ENCODE measurements at regions of chr9 and their contacts with region 1.

Region 1: DNA sequence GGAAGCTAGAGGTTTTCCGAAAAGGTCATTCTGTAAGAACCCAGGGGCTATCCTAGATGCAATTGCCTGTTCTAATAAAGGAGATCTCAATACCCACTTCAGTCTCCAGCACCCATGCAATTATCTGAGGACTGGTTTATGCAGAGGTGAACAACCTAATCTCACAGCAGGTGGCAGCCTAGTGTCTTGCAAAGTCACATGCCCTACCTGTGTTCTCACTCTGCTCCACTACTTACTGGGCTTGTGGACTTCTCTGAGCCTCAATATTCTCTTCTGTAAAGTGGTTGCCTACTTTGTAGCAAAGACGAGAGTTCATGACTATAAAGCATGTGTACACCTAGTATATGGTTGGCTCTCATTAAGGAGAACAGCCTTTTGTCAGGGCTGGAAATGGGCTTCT is 21.0 kb upstream of the ALDH1B1 start:
- DNase-seq: peak in 1 of 2 donors; percentile 51
- ATAC-seq: no peak
- H3K4me3 ChIP-seq: no peak overlapping the region
- H3K27ac ChIP-seq: no peak overlapping the region
- H3K4me1 ChIP-seq: no peaks in the 10 kb centered on the region
- H3K27me3 ChIP-seq: no peaks in the 10 kb centered on the region

Region 2: DNA sequence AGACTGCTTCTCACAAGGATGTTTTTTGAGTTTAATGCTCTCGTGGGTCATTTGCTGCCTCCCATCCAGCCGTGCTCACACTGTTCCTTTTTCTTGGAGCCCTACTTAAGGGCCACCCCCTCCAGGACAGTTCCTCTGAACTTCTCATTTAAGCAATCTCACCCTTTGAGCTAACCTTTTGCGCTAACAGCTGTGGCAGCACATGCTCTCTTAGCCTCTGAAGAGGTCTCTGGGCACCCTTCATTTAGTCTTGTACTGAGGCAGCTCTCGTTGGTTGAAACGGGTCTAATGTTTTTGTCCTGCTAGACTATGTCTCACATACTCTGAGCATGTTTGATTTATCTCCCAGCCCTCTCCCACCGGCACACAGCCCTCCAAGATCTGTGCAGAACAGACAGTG is 32.8 kb after region 1 on chr9:
- intact Hi-C with region 1: loop called (anchors 2 kb)
- DNase-seq: no peak
- ATAC-seq: no peak
- H3K4me3 ChIP-seq: no peak overlapping the region
- H3K27ac ChIP-seq: no peak overlapping the region
- H3K4me1 ChIP-seq: no peaks in the 10 kb centered on the region
- H3K27me3 ChIP-seq: no peaks in the 10 kb centered on the region

Region 3: GRCh38 chr9:38423973-38424843 is 52.7 kb after region 1 on chr9 and contains the start of gene IGFBPL1:
- intact Hi-C with region 1: loop called in 1 of 2 experiments (anchors 5 kb)
- DNase-seq: no peak
- ATAC-seq: peak; percentile 60
- H3K4me3 ChIP-seq: peak within 1 kb of the TSS; percentile 72 to 75
- H3K27ac ChIP-seq: peak within 1 kb of the TSS in 1 of 2 donors; percentile 52
- H3K4me1 ChIP-seq: peaks cover 0 to 4% of the 10 kb centered on the region in 2 donors
- H3K27me3 ChIP-seq: no peaks in the 10 kb centered on the region
- total RNA-seq, gene IGFBPL1: 5.9 to 27.8 TPM

Region 4: DNA sequence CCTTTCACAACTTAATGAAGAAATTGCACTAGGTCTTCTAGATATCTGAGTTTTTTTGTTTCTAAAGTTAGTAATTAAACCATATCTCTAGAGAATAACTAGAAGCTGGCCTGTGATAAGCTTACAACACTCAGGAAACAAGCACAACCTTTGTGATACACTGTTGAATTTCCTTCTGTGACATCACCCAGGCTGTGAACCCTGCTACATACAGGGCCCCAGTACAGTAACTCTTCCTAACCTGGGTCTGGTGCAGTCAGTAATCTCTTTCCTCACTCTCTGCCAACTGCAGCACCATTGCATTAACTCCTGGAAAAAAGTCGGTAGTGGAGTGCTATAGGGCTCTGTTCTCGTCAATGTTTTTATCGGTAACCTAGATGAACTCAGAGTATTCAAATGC is 63.4 kb after region 1 on chr9:
- intact Hi-C with region 1: loop called in 1 of 2 experiments (anchors 2 kb)
- DNase-seq: no peak
- ATAC-seq: no peak
- H3K4me3 ChIP-seq: no peak overlapping the region
- H3K27ac ChIP-seq: no peak overlapping the region
- H3K4me1 ChIP-seq: no peaks in the 10 kb centered on the region
- H3K27me3 ChIP-seq: no peaks in the 10 kb centered on the region

Region 5: GRCh38 chr9:38727497-38728001 is 356.1 kb after region 1 on chr9:
- intact Hi-C with region 1: no loop called
- DNase-seq: no peak
- ATAC-seq: no peak
- H3K4me3 ChIP-seq: no peak overlapping the region
- H3K27ac ChIP-seq: no peak overlapping the region
- H3K4me1 ChIP-seq: no peaks in the 10 kb centered on the region
- H3K27me3 ChIP-seq: no peaks in the 10 kb centered on the region

Measured in aorta (tissue), 5 donors.